ENCODE measurements at regions of chr3 and their contacts with region 1.

Region 1: GRCh38 chr3:48548729-48549705 is 7.6 kb downstream of the PFKFB4 start:
- DNase-seq: peak; percentile 69 to 90
- ATAC-seq: peak; percentile 84

Region 2: DNA sequence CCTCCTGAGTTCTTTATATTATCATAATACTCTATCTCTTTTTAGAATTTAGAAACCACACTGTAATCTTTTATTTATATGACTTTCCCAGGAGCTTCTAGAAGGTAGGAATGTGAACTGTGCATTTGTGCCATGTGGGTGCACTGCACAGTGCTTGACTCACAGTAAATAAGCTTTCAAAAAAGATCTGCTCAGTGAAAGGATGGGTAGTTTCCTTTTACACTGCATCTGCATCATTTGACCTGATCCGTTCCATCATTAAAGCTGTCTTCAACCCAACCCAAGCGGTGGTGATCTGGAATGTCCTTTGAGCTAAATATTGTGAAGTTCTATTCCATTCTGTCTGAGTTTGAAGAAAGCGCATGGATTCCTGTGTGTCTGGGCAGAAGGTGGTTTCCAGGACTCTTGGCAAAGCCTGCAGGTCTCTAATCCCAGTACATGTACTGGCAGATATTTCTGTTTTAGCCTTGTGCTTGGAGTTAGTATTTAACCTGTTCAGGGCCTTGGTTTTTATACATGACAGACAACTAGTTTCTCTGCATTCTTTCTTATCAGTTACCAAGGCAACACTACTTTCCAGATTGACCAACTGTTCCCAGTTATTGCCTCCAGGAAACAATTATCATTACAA is 649.4 kb before region 1 on chr3:
- intact Hi-C with region 1: no loop called
- DNase-seq: no peak
- ATAC-seq: no peak

Region 3: GRCh38 chr3:48464713-48465221 is 84.2 kb before region 1 on chr3:
- intact Hi-C with region 1: loop called (anchors 5 kb)
- DNase-seq: peak in 1 of 2 donors; percentile 39
- ATAC-seq: no peak

Measured in left colon (tissue), 2 donors.